Dendritic cell treated with granulocyte-macrophage colony-stimulating factor and Interleukin-4, amounts not matched to agents 40 ng/mL and 50 ng/mL, for 4 days (primary cell): ENCODE measurements at regions of chr9 and their contacts with region 1.

Region 1: DNA sequence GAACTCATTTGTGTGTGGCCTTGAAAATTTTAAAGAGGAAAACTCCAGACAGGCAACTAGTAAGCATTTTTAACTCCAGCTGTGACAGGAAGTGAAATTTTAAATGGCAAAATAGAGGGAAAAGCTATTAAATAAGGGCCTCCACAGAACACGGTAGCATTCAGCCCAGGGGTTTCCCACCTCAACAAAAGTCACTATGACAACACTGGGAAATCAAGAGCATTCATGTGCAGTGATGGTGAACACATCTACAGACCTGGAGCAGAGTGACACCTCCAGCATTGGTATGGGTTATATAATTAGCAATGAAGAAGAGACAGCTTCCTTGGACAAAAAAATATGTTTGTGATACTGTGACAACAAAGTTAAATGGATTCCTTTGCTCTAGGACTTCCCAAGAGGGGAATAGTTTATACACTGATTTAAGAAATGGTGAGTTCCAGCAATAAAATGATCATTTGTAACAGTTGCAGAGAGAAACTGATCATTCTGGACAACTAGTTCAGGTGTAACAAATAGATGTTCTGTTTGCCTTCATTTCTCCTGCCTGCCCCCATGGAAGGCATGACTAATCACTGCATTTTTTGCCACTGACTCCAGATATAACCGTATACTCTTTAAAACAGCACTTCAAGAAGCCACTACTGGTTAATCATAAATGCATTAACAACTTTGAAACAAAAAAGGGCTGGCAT is 93.3 kb upstream of the SLC44A1 start:
- H3K4me3 Mint-ChIP-seq: no peak overlapping the region
- H3K27ac Mint-ChIP-seq: no peak overlapping the region
- H3K4me1 Mint-ChIP-seq: peaks cover 36% of the 10 kb centered on the region
- H3K27me3 Mint-ChIP-seq: no peaks in the 10 kb centered on the region

Region 2: GRCh38 chr9:105053209-105053652 is 97.9 kb before region 1 on chr9:
- intact Hi-C with region 1: loop called (anchors 5 kb)
- H3K4me3 Mint-ChIP-seq: no peak overlapping the region
- H3K27ac Mint-ChIP-seq: peak overlapping the region; percentile 68
- H3K4me1 Mint-ChIP-seq: peaks cover 39% of the 10 kb centered on the region
- H3K27me3 Mint-ChIP-seq: no peaks in the 10 kb centered on the region